Esophagus muscularis mucosa (tissue), 4 donors: ENCODE measurements at regions of chr2 and their contacts with region 1.

Region 1: DNA sequence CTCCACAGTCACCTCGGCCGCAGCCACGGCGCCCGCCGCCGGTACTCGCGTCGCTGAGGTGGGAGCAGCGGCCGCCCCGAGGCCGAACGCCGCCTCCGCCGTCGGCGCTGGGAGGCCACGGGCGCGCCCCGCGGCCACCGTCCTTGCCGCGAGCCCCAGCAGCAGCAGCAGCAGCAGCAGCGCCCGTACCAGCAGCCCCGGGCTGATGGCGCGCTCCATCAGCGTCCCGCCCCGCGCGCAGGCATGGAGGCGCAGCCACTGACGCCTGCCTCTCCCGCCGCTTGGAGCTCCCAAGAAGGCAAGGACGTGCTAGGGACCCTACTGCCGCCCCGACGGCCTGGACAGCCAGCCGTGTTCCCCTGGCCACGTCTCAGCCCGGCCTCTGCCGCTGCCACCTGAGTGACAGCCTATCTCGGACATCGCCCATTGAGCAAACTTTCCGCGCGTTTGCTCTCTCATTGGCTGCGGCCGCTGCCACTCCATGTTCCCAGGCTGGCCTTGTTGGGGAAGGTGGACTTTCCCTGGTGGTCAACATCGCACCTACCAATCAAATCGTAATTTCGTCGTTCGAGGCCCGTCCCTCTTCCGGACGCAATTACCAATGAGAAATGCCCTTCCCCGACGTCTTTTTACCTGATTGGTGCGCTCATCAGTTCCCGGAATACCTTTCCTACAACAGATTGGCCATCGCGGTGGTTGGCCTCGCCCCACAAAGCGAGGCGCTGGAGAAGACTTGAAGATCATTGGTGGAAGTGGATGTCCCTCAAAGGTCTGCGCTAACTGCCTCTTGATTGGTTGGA is at the start of gene EIF2AK3:
- DNase-seq: peak; percentile 100
- H3K4me3 ChIP-seq: peak within 1 kb of the TSS; percentile 93 to 99 (median 94)
- H3K27ac ChIP-seq: peak within 1 kb of the TSS; percentile 97 to 99 (median 98)
- H3K4me1 ChIP-seq: peaks cover 24 to 41% (median 33%) of the 10 kb centered on the region in 4 donors
- H3K27me3 ChIP-seq: no peaks in the 10 kb centered on the region
- CTCF ChIP-seq: peak in 2 of 3 experiments; percentile 10 to 29
- EP300 ChIP-seq: no peak
- POLR2A ChIP-seq: peak; percentile 99
- total RNA-seq, gene EIF2AK3: 7.9 to 11.9 (median 10.0) TPM

Region 2: GRCh38 chr2:88590998-88591613 is 36.1 kb before region 1 on chr2:
- intact Hi-C with region 1: loop called (anchors 5 kb)
- DNase-seq: peak; percentile 19
- H3K4me3 ChIP-seq: no peak overlapping the region
- H3K27ac ChIP-seq: no peak overlapping the region
- H3K4me1 ChIP-seq: no peaks in the 10 kb centered on the region
- H3K27me3 ChIP-seq: no peaks in the 10 kb centered on the region
- CTCF ChIP-seq: peak; percentile 70 to 83 (median 74)
- EP300 ChIP-seq: no peak
- POLR2A ChIP-seq: no peak

Region 3: DNA sequence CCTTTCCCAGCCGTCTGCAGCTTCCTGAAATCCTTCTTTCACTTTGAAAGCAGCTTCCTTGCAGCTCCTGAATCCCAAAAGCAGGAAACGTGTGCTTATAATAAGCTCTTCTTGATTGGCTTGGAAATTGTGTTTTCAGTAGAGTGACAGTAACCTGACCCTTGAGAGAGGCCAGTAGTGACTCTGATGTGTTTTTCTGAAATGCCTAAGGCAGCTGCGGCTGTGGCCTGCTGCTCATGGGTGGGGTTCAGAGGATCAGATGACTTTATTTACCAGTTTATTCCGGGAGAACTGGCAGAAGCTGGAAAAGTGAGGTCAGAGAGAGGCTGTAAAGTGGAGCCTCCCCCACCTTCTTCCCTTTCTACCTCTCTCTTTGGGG is 32.3 kb after region 1 on chr2:
- intact Hi-C with region 1: no loop called
- DNase-seq: no peak
- H3K4me3 ChIP-seq: peak overlapping the region in 2 of 4 donors; percentile 15 to 21
- H3K27ac ChIP-seq: peak overlapping the region; percentile 51 to 71 (median 60)
- H3K4me1 ChIP-seq: peaks cover 0 to 19% (median 12%) of the 10 kb centered on the region in 4 donors
- H3K27me3 ChIP-seq: no peaks in the 10 kb centered on the region
- CTCF ChIP-seq: no peak
- EP300 ChIP-seq: no peak
- POLR2A ChIP-seq: no peak

Region 4: GRCh38 chr2:88669371-88670214 is 42.3 kb after region 1 on chr2:
- intact Hi-C with region 1: loop called (anchors 5 kb)
- DNase-seq: no peak
- H3K4me3 ChIP-seq: no peak overlapping the region
- H3K27ac ChIP-seq: no peak overlapping the region
- H3K4me1 ChIP-seq: peaks cover 0 to 6% (median 4%) of the 10 kb centered on the region in 4 donors
- H3K27me3 ChIP-seq: no peaks in the 10 kb centered on the region
- CTCF ChIP-seq: peak; percentile 31 to 49 (median 41)
- EP300 ChIP-seq: no peak
- POLR2A ChIP-seq: no peak

Region 5: DNA sequence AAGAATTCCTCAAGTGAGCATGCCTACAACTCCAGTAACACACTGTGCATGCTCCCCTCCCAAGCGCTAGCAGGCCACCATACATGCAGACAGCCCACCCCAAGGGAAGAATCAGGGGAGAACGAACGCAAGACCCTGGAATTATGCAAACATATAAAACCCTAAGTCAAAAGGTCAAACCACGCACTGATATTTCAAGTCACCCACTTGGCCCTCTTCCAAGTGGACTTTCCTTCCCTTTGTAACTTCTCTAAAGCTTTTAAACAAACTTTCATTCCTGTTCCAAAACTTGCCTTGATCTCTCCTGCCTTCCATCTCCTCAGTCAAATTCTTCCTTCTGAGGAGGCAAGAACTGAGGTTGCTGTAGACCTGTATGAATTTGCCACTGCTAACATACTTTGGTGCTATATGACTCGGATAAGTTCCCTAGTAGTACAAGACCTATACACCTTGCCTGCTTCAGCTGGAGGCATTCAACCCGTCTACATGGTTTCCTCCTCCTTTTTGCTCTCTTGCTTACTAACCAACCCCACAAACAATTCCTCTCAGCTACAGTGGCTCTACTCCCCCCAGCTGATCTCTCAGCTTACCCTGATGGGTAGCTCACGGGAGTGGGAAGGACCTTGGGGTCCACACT is 53.1 kb after region 1 on chr2:
- intact Hi-C with region 1: no loop called
- DNase-seq: no peak
- H3K4me3 ChIP-seq: no peak overlapping the region
- H3K27ac ChIP-seq: no peak overlapping the region
- H3K4me1 ChIP-seq: no peaks in the 10 kb centered on the region
- H3K27me3 ChIP-seq: no peaks in the 10 kb centered on the region
- CTCF ChIP-seq: no peak
- EP300 ChIP-seq: no peak
- POLR2A ChIP-seq: no peak

Region 6: GRCh38 chr2:88691339-88692183 is 64.3 kb after region 1 on chr2 and contains the start of gene RPIA:
- intact Hi-C with region 1: loop called (anchors 5 kb)
- DNase-seq: peak; percentile 99
- H3K4me3 ChIP-seq: peak within 1 kb of the TSS; percentile 70 to 96 (median 78)
- H3K27ac ChIP-seq: peak within 1 kb of the TSS; percentile 73 to 85 (median 82)
- H3K4me1 ChIP-seq: peaks cover 18 to 34% (median 29%) of the 10 kb centered on the region in 4 donors
- H3K27me3 ChIP-seq: no peaks in the 10 kb centered on the region
- CTCF ChIP-seq: peak; percentile 49 to 68 (median 62)
- EP300 ChIP-seq: no peak
- POLR2A ChIP-seq: peak; percentile 36
- total RNA-seq, gene RPIA: 6.6 to 8.6 (median 7.4) TPM